Upper lobe of right lung (tissue), 1 donor: ENCODE measurements at regions of chr6 and their contacts with region 1.

Region 1: GRCh38 chr6:47780510-47781356 is 1.1 kb upstream of the OPN5 start:
- DNase-seq: no peak
- ATAC-seq: peak; percentile 90
- H3K4me3 ChIP-seq: no peak overlapping the region
- H3K27ac ChIP-seq: no peak overlapping the region
- H3K4me1 ChIP-seq: peaks cover 10% of the 10 kb centered on the region
- H3K27me3 ChIP-seq: no peaks in the 10 kb centered on the region
- CTCF ChIP-seq: peak; percentile 62

Region 2: GRCh38 chr6:47631269-47631772 is 149.4 kb before region 1 on chr6:
- intact Hi-C with region 1: loop called (anchors 5 kb)
- DNase-seq: no peak
- ATAC-seq: peak; percentile 78
- H3K4me3 ChIP-seq: no peak overlapping the region
- H3K27ac ChIP-seq: no peak overlapping the region
- H3K4me1 ChIP-seq: peaks cover 8% of the 10 kb centered on the region
- H3K27me3 ChIP-seq: no peaks in the 10 kb centered on the region
- CTCF ChIP-seq: peak; percentile 62